CD4-positive, alpha-beta T cell (primary cell): ENCODE measurements at regions of chr5 and their contacts with region 1.

Region 1: GRCh38 chr5:144191998-144192397 is 21.3 kb downstream of the KCTD16 start:
- DNase-seq: peak in 5 of 14 experiments; percentile 19 to 92 (median 91)
- ATAC-seq: peak; percentile 39
- H3K4me3 ChIP-seq: peak overlapping the region; percentile 11
- H3K4me3 Mint-ChIP-seq: no peak overlapping the region
- H3K27ac ChIP-seq: peak overlapping the region; percentile 84 to 90
- H3K27ac Mint-ChIP-seq: no peak overlapping the region
- H3K4me1 ChIP-seq: peaks cover 42% of the 10 kb centered on the region
- H3K4me1 Mint-ChIP-seq: peaks cover 37% of the 10 kb centered on the region
- H3K27me3 ChIP-seq: no peaks in the 10 kb centered on the region
- H3K27me3 Mint-ChIP-seq: no peaks in the 10 kb centered on the region
- CTCF ChIP-seq: peak; percentile 72

Region 2: DNA sequence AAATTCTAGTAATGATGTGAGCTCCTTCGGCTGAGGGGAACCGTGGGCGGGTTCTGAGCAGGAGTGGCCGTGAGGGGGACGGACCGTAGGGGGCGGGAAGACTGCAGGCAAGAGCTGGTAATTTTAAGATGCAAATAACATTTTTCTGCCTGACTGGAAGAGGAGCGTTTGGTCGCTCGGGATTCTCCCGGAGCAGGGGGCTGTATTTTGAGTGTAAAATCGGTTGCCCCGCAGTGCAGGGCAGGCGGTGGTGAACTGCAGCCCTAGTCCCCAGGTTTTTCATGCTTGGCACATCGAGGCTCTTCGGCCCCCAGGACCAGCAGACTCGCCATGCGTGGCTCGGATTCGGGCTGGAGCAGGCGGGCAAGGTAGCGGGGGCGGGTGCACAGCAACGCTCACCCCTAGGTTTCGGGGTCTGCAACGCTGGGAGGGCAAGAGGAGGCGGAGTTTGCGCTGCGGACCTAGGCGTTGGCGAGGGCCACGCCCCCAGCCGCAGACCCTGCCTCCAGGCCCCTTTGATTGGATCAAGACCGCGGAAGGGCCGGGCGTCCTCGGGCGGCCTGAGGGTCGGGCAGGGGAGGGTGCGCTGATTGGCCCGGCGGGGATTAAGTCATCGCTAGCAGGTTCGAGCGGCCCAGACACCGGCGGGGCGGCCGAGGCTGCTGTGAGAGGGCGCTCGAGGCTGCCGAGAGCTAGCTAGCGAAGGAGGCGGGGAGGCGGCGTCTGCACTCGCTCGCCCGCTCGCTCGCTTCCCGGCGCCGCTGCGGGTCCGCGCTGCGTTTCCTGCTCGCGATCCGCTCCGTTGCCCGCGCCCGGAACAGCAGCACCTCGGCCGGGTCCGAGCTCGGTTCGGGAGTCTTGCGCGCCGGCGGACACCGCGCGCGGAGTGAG is 1422.0 kb before region 1 on chr5 and contains the start of gene ARHGAP26:
- CTCF ChIA-PET with region 1: no interaction called
- POLR2A ChIA-PET with region 1: interaction called, 5 read pairs
- intact Hi-C with region 1: loop called in 1 of 2 experiments (anchors 5 kb)
- DNase-seq: peak; percentile 81 to 96 (median 91)
- ATAC-seq: peak; percentile 83
- H3K4me3 ChIP-seq: peak within 1 kb of the TSS; percentile 99
- H3K4me3 Mint-ChIP-seq: peak within 1 kb of the TSS; percentile 96
- H3K27ac ChIP-seq: peak within 1 kb of the TSS; percentile 69 to 72
- H3K27ac Mint-ChIP-seq: peak within 1 kb of the TSS; percentile 87
- H3K4me1 ChIP-seq: peaks cover 32% of the 10 kb centered on the region
- H3K4me1 Mint-ChIP-seq: peaks cover 32% of the 10 kb centered on the region
- H3K27me3 ChIP-seq: no peaks in the 10 kb centered on the region
- H3K27me3 Mint-ChIP-seq: no peaks in the 10 kb centered on the region
- CTCF ChIP-seq: peak; percentile 27
- total RNA-seq, gene ARHGAP26: 24.9 to 27.3 TPM

Region 3: GRCh38 chr5:143222287-143223231 is 969.4 kb before region 1 on chr5:
- CTCF ChIA-PET with region 1: no interaction called
- POLR2A ChIA-PET with region 1: no interaction called
- intact Hi-C with region 1: loop called in 1 of 2 experiments (anchors 10 kb)
- DNase-seq: peak in 13 of 14 experiments; percentile 25 to 91 (median 48)
- ATAC-seq: peak; percentile 82
- H3K4me3 ChIP-seq: peak overlapping the region; percentile 17
- H3K4me3 Mint-ChIP-seq: peak overlapping the region; percentile 52
- H3K27ac ChIP-seq: peak overlapping the region; percentile 46 to 85
- H3K27ac Mint-ChIP-seq: peak overlapping the region; percentile 87
- H3K4me1 ChIP-seq: peaks cover 37% of the 10 kb centered on the region
- H3K4me1 Mint-ChIP-seq: peaks cover 44% of the 10 kb centered on the region
- H3K27me3 ChIP-seq: no peaks in the 10 kb centered on the region
- H3K27me3 Mint-ChIP-seq: no peaks in the 10 kb centered on the region
- CTCF ChIP-seq: no peak

Region 4: DNA sequence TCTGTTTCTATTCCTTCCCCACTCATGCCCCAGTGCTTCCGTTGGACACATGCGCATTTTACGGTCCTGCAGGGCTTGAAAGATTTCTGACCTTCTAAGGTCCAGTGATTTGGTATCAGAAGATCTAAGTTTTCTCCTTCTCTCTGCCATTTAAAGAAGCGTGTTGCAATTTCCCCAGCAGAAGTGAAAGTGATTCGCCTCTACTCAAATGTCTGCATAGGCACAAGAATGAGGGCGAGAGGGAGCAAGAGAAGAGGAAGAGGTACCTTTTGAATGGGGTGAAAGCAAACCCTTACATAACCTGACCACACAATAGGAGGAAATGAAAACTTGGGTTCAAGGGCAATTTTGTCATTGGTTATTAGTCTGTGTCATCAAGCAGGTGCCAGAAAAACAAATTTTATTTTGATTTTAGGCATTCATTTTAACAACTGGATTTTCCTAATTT is 756.8 kb before region 1 on chr5:
- CTCF ChIA-PET with region 1: interaction called, 3 read pairs
- POLR2A ChIA-PET with region 1: interaction called, 9 read pairs
- intact Hi-C with region 1: loop called in 1 of 2 experiments (anchors 10 kb)
- DNase-seq: peak in 10 of 14 experiments; percentile 17 to 81 (median 30)
- ATAC-seq: peak; percentile 50
- H3K4me3 ChIP-seq: peak overlapping the region; percentile 60
- H3K4me3 Mint-ChIP-seq: peak overlapping the region; percentile 92
- H3K27ac ChIP-seq: peak overlapping the region; percentile 62 to 68
- H3K27ac Mint-ChIP-seq: peak overlapping the region; percentile 93
- H3K4me1 ChIP-seq: peaks cover 34% of the 10 kb centered on the region
- H3K4me1 Mint-ChIP-seq: peaks cover 73% of the 10 kb centered on the region
- H3K27me3 ChIP-seq: no peaks in the 10 kb centered on the region
- H3K27me3 Mint-ChIP-seq: no peaks in the 10 kb centered on the region
- CTCF ChIP-seq: no peak

Region 5: DNA sequence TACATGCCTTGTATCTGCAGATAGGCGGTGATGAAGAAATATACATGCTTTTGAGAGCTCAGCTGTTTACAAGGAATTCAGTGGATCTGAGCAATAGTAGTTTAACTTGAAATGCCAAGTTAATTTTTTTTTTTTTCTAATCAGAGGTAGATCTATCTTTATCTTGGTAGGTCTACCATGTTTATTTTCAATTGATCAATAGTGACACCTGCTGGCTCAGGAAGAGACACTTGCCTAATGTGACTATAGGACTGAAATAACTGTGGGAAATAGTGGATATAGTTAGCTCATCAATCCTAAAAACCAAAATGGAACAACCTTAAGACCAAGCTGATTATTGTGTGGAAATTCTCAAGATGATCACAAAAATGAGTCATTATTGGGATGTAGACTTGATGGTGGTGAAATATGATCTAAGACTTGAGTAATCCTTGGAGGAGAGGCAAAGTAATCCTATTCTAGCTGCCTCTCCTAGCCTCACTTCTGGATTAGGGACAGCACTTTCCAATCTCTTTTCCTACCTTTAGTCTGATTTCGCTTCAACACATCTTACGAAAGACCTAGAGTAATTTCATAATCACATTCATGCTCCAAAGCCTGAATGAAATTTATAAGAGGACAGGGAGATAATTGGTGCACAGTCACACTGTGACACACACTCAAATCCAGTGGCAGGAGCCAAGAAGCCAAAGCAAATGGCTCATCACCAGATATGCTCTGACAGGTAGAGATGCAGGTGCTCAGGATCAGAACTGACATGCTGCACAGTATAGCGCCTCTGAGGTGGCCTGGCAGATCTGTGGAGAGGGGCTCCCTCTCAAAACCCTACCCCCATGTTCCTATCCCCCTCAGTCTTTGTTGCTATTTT is 223.8 kb before region 1 on chr5:
- CTCF ChIA-PET with region 1: no interaction called
- POLR2A ChIA-PET with region 1: no interaction called
- intact Hi-C with region 1: loop called in 1 of 2 experiments (anchors 5 kb)
- DNase-seq: peak in 4 of 14 experiments; percentile 5 to 52 (median 47)
- ATAC-seq: no peak
- H3K4me3 ChIP-seq: no peak overlapping the region
- H3K4me3 Mint-ChIP-seq: no peak overlapping the region
- H3K27ac ChIP-seq: no peak overlapping the region
- H3K27ac Mint-ChIP-seq: no peak overlapping the region
- H3K4me1 ChIP-seq: no peaks in the 10 kb centered on the region
- H3K4me1 Mint-ChIP-seq: no peaks in the 10 kb centered on the region
- H3K27me3 ChIP-seq: no peaks in the 10 kb centered on the region
- H3K27me3 Mint-ChIP-seq: peaks cover 7% of the 10 kb centered on the region
- CTCF ChIP-seq: peak; percentile 60

Region 6: DNA sequence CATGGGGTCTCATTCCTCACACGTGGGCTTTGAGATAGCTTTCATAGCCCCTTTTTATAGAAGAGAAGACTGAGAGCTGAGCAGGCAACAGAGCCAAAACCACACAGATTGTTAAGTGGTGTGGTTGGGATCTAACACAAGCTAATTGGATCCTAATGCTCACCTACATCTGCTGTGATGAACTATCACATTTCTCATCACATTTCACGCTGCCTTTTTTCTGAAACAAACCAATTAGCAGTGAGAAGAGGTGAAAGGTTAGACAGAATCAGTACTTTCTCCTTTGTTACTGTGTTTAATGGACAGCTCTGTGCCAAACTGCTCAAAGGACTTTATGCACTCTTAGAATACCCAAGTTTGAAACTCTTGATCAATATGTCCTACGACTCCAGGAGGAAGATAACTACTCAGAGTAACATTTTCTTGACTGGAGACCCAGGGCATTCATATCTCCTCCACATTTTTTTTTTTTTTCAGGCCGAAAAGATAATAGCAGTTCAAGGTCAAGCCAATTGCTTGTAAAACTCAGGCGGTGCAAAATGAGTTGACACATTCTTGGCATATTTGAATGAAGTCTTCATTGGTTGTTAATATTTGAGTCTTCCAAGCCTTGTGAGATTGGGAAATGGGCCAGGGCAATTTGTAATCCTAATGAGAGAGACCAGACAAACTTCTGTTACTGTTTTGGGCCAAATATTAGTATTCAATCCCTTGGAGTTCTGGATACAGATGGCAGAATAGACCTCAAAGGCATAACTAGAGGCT is 117.1 kb after region 1 on chr5:
- CTCF ChIA-PET with region 1: no interaction called
- POLR2A ChIA-PET with region 1: no interaction called
- intact Hi-C with region 1: no loop called
- DNase-seq: no peak
- ATAC-seq: no peak
- H3K4me3 ChIP-seq: no peak overlapping the region
- H3K4me3 Mint-ChIP-seq: no peak overlapping the region
- H3K27ac ChIP-seq: no peak overlapping the region
- H3K27ac Mint-ChIP-seq: no peak overlapping the region
- H3K4me1 ChIP-seq: no peaks in the 10 kb centered on the region
- H3K4me1 Mint-ChIP-seq: no peaks in the 10 kb centered on the region
- H3K27me3 ChIP-seq: no peaks in the 10 kb centered on the region
- H3K27me3 Mint-ChIP-seq: peaks cover 30% of the 10 kb centered on the region
- CTCF ChIP-seq: no peak